Posterior cingulate gyrus (tissue), 11 donors: ENCODE measurements at regions of chr10 and their contacts with region 1.

Region 1: DNA sequence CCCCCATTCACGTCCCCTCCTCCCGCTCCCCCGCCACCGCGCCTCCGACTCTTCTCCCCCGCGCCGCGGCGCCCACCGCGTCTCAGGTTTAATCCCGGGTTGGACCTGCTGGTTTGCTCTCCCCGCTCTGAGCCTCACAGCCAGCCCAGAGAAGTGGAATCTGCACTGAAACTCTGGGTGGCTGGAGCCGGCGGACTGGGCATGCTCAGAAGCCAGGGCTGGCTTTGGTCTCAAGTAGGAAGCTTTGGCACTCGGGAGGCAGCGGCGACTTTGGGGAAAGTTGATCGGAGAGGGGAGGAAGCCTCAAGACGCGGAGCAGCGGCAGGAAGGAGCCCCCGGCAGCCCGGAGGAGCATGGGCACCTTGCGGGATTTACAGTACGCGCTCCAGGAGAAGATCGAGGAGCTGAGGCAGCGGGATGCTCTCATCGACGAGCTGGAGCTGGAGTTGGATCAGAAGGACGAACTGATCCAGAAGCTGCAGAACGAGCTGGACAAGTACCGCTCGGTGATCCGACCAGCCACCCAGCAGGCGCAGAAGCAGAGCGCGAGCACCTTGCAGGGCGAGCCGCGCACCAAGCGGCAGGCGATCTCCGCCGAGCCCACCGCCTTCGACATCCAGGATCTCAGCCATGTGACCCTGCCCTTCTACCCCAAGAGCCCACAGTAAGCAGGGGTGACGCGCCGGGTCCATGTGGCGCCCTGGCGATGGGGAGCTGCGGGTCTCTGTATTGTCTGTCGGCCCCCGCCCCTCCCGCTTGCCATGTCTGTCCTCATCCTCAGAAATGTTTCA is at the start of gene PRKG1:
- DNase-seq: peak; percentile 45 to 95 (median 73)

Region 2: DNA sequence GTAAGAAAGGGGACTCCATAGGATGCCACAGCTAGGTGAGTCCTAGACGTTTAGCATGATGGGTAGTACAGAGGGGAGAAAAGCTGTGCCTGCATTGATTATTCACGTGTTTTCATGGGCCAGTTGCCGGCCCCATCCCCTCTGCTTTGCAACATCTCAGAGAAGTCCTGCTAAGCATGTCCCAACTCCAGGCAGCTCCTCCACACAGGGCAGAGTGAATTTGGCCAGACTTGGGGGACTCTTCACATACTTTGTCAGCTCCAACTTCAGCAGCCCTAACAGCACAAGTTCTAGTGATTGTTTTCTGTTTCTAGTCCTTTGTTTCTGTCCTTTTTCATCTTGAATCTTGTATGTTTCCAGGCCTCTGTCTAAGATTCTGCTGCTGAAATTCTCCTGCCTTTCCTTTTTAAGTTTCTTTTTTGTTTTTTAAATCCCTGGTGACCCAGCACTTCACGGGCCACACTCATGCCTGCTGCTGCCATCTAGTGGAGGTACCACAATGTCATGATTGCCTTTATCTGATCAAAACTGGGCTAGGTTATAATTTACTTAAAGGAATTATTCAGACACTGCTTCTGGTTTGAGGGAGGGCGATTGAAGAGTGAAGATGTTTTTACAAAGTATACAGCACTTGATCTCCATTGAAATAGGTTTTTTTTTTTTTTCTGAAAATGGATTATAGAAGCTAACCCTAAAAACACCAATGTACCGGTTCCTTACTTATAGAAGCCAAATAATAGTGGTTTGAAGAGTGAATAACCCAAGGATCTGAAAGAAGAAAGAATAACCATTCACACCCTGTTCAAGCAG is 348.1 kb after region 1 on chr10:
- intact Hi-C with region 1: loop called (anchors 5 kb)
- DNase-seq: peak in 9 of 10 donors; percentile 23 to 90 (median 44)